ENCODE measurements at regions of chr20 and their contacts with region 1.

Region 1: DNA sequence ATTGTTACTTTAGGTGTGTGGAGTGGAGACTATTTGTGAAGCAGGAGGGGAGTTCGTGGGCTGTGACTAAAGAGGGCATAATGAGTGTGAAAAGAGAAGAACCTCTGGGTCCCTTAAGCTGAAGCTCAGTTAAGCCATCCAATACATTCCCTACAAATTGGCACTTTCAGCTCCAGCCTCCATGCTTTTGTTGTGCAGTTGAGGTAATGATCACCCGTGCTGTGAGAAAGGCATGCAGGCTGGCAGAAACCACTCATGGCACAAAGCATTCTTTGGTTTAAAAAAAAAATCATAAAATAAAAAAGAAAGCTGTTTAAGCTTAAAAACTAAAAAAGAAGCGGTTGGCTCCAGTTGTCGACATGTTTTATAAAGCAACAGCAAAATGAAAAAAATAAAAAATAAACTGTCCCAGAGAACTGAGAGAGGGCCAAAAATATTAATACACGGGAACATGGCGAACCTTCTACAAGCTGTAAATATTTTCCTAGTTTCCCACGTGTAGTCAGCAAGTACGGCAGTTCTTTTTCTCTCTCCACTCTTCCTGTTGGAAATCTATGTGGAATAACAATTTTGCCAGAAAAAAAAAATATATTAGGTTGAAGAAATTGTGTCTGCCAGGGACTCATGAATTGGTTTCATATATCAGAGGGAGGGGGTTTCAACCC is 82.2 kb downstream of the ANKRD60 start:
- DNase-seq: no peak
- H3K27ac ChIP-seq: no peak overlapping the region
- CTCF ChIP-seq: no peak

Region 2: GRCh38 chr20:57810511-57811373 is 335.5 kb before region 1 on chr20:
- CTCF ChIA-PET with region 1: no interaction called
- POLR2A ChIA-PET with region 1: interaction called, 13 read pairs
- DNase-seq: peak; percentile 83
- H3K27ac ChIP-seq: peak overlapping the region; percentile 62
- CTCF ChIP-seq: no peak

Region 3: DNA sequence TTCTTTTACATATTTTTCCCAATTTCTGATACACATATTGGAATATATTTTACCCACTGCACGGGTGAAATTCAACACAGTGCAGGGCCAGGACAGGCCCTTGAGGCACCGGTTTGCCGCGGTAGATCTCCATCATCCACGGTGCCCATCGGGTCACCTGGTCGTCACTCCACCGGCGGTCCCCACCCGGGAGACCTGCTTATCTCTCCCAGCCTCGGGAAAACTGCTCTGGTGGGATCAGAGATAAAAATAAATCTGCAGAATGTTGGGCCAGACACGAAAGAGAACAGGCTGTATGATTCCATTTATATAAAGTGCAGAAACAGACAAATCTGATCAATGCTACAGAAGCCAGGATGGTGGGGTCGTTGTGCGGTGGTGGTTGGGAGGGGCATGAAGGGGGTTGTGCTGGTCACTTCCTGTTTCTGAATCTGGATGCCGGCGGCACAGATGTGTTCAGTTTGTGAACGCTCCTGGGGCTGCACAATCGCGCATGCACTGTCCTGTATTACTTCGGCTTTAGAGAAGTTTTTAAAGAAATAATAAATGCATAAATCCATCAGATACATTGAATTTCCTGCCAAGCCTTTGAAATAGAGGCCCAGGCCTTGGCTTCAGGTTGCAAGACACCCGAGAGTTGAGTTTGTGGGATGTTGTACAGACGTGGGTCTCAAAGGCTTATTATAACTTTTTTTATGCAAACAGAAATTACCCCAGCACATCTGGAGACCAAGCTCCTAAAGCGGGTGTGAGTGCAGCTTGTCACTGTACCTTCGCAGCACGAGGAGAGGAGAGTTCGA is 27.9 kb after region 1 on chr20:
- CTCF ChIA-PET with region 1: no interaction called
- POLR2A ChIA-PET with region 1: no interaction called
- DNase-seq: no peak
- H3K27ac ChIP-seq: no peak overlapping the region
- CTCF ChIP-seq: no peak

Measured in RWPE1 (cell line).